H1 (cell line): ENCODE measurements at regions of chr15 and their contacts with region 1.

Region 1: GRCh38 chr15:81265944-81266775 is 57.8 kb downstream of the STARD5 start:
- DNase-seq: peak; percentile 70 to 93
- H3K4me3 ChIP-seq: peak overlapping the region in 3 of 4 experiments; percentile 7 to 51 (median 16); a peak in 3 of 8 replicates
- H3K27ac ChIP-seq: no peak overlapping the region
- H3K4me1 ChIP-seq: peaks cover 0 to 5% (median 1%) of the 10 kb centered on the region in 4 experiments; a peak in 2 of 7 replicates
- H3K27me3 ChIP-seq: peaks cover 0 to 2% (median 0%) of the 10 kb centered on the region in 4 experiments; a peak in 2 of 7 replicates
- CTCF ChIP-seq: peak; percentile 92 to 98 (median 94)
- EP300 ChIP-seq: no peak
- POLR2A ChIP-seq: no peak
- RAD21 ChIP-seq: peak; percentile 94 to 95

Region 2: GRCh38 chr15:81001152-81002000 is 264.8 kb before region 1 on chr15:
- CTCF ChIA-PET with region 1: interaction called, 12 read pairs
- POLR2A ChIA-PET with region 1: interaction called, 3 read pairs
- DNase-seq: peak in 1 of 2 experiments; percentile 75
- H3K4me3 ChIP-seq: peak overlapping the region; percentile 70 to 90 (median 81)
- H3K27ac ChIP-seq: peak overlapping the region; percentile 62; the same call in 1 of the 2 replicates
- H3K4me1 ChIP-seq: peaks cover 0 to 8% (median 5%) of the 10 kb centered on the region in 4 experiments; a peak in 4 of 7 replicates
- H3K27me3 ChIP-seq: peaks cover 0 to 12% (median 9%) of the 10 kb centered on the region in 4 experiments; a peak in 5 of 7 replicates
- CTCF ChIP-seq: no peak
- EP300 ChIP-seq: no peak
- POLR2A ChIP-seq: no peak
- RAD21 ChIP-seq: no peak

Region 3: GRCh38 chr15:81133782-81134461 is 132.2 kb before region 1 on chr15 and contains the start of gene CFAP161:
- CTCF ChIA-PET with region 1: interaction called, 13 read pairs
- POLR2A ChIA-PET with region 1: no interaction called
- DNase-seq: peak; percentile 82 to 95
- H3K4me3 ChIP-seq: peak within 1 kb of the TSS; percentile 45 to 68 (median 48); a peak in 7 of 8 replicates
- H3K27ac ChIP-seq: no peak within 1 kb of the TSS
- H3K4me1 ChIP-seq: no peaks in the 10 kb centered on the region; a peak in 1 of 7 replicates
- H3K27me3 ChIP-seq: peaks cover 0 to 7% (median 6%) of the 10 kb centered on the region in 4 experiments; a peak in 4 of 7 replicates
- CTCF ChIP-seq: no peak
- EP300 ChIP-seq: no peak
- POLR2A ChIP-seq: no peak
- RAD21 ChIP-seq: no peak
- total RNA-seq, gene CFAP161: not detected in 2 replicates

Region 4: DNA sequence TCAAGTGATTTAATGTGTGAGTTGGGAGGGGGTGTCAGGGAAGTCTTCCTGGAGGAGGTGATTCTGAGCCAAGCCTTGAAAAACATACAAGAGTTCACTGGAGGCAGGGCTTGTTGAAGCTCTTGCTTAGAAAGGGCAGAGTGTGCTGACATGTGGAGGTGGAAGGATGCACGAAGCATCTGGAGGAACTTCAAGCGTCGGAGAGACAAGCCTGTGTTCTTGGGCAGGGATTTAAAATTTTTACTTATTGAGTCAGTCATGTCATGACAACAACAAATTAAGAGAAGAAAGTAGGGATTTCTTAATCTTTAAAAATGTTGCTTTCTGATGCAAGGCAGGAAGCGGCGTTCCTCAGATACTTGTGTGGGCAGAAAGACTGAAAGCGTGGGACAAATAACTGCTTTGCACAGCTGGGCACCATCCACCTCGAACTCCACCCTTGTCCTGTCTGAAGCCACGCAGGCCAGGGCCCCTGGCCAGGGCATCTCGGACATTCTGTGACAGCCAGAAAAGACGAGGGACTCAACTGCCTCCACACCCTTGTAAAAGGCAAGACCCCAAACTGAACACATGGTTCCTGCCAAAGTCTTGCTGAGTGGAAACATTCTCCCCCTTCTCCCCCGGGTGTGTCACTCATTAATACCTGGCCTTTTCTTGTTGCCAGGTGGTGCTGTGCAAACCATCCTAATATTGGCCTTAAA is 76.4 kb before region 1 on chr15:
- CTCF ChIA-PET with region 1: interaction called, 46 read pairs
- POLR2A ChIA-PET with region 1: no interaction called
- DNase-seq: peak in 1 of 2 experiments; percentile 34
- H3K4me3 ChIP-seq: no peak overlapping the region
- H3K27ac ChIP-seq: no peak overlapping the region
- H3K4me1 ChIP-seq: no peaks in the 10 kb centered on the region; a peak in 1 of 7 replicates
- H3K27me3 ChIP-seq: no peaks in the 10 kb centered on the region
- CTCF ChIP-seq: no peak
- EP300 ChIP-seq: no peak
- POLR2A ChIP-seq: no peak
- RAD21 ChIP-seq: no peak

Region 5: GRCh38 chr15:81296673-81297072 is 30.5 kb after region 1 on chr15:
- CTCF ChIA-PET with region 1: interaction called, 17 read pairs
- POLR2A ChIA-PET with region 1: no interaction called
- DNase-seq: no peak
- H3K4me3 ChIP-seq: no peak overlapping the region
- H3K27ac ChIP-seq: no peak overlapping the region
- H3K4me1 ChIP-seq: peaks cover 0 to 7% (median 4%) of the 10 kb centered on the region in 4 experiments; a peak in 4 of 7 replicates
- H3K27me3 ChIP-seq: no peaks in the 10 kb centered on the region; a peak in 1 of 7 replicates
- CTCF ChIP-seq: no peak
- EP300 ChIP-seq: no peak
- POLR2A ChIP-seq: no peak
- RAD21 ChIP-seq: no peak

Region 6: DNA sequence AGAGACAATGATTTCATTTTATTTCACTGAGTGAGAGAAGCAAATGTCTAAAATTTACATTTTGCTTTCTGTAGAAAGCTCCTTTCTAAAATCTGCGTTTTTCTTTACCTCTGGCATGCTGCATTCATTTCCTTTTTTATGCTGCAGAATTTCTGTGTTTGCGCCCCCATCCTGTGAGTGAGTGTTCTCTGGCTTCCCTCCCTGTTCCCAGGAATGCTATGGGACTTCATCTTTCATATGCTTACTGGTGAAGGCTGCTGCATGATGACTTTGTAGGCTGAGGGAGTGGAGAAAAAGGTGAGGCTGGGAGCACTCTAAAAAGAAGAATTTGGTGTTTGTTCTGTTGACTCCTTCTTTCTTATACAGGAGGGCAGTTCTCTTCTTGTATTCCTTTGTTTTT is 115.6 kb after region 1 on chr15:
- CTCF ChIA-PET with region 1: interaction called, 13 read pairs
- POLR2A ChIA-PET with region 1: no interaction called
- DNase-seq: no peak
- H3K4me3 ChIP-seq: no peak overlapping the region
- H3K27ac ChIP-seq: no peak overlapping the region
- H3K4me1 ChIP-seq: no peaks in the 10 kb centered on the region
- H3K27me3 ChIP-seq: no peaks in the 10 kb centered on the region
- CTCF ChIP-seq: no peak
- EP300 ChIP-seq: no peak
- POLR2A ChIP-seq: no peak
- RAD21 ChIP-seq: no peak

Region 7: DNA sequence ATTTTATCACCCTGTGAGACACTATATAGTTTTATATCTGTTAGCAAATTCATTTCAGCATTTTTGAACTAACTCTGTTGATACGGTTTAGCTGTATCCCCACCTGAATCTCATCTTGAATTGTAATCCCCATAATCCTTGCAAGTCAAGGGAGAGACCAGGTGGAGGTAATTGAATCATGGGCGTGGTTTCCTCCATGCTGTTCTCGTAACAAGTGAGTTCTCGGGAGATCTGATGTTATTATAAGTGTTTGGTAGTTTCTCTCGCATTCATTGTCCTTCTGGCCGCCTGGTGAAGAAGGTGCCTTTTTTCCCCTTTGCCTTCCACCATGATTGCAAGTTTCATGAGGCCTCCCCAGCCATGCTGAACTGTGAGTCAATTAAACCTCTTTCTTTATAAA is 161.0 kb after region 1 on chr15:
- CTCF ChIA-PET with region 1: no interaction called
- POLR2A ChIA-PET with region 1: no interaction called
- DNase-seq: no peak
- H3K4me3 ChIP-seq: no peak overlapping the region
- H3K27ac ChIP-seq: no peak overlapping the region
- H3K4me1 ChIP-seq: no peaks in the 10 kb centered on the region
- H3K27me3 ChIP-seq: peaks cover 0 to 1% (median 0%) of the 10 kb centered on the region in 4 experiments; a peak in 1 of 7 replicates
- CTCF ChIP-seq: no peak
- EP300 ChIP-seq: no peak
- POLR2A ChIP-seq: no peak
- RAD21 ChIP-seq: no peak

Region 8: GRCh38 chr15:81511138-81511537 is 245.0 kb after region 1 on chr15:
- CTCF ChIA-PET with region 1: no interaction called
- POLR2A ChIA-PET with region 1: no interaction called
- DNase-seq: no peak
- H3K4me3 ChIP-seq: no peak overlapping the region
- H3K27ac ChIP-seq: no peak overlapping the region
- H3K4me1 ChIP-seq: no peaks in the 10 kb centered on the region
- H3K27me3 ChIP-seq: no peaks in the 10 kb centered on the region
- CTCF ChIP-seq: no peak
- EP300 ChIP-seq: no peak
- POLR2A ChIP-seq: no peak
- RAD21 ChIP-seq: no peak